Calu3 (cell line): ENCODE measurements at regions of chr11 and their contacts with region 1.

Region 1: DNA sequence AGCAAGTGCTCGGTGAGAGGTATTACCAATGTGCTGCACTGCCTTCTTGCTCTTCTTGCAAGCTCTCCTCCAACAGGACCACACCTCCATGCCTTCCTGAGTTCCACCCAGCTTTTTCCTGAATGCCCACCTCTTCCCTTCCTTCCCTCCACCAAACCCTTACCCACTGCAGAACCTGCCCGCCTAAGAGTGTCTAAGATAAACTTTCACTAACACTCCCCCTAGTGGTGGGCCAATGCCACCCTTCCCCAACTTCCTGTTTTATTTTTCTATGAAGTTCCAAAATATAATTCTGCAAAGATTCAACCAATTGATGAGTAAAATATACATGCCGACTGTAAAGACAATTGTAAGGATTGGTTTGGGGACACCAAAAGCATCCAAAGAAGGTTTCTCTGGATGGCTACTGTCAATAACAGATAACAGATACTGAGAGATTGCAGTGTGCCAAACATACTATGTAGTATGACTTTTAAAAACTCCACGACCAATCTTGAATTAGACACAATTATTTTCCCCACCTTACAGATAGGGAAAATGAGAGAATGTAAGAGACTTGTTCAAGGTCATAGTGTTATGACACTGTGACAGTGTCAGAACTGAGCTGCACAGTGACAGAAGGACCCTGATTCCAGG is 38.6 kb upstream of the BMAL1 start:
- DNase-seq: peak; percentile 68
- H3K4me3 Mint-ChIP-seq: no peak overlapping the region
- H3K27ac Mint-ChIP-seq: no peak overlapping the region
- H3K4me1 Mint-ChIP-seq: peaks cover 10% of the 10 kb centered on the region
- H3K27me3 Mint-ChIP-seq: peaks cover 14% of the 10 kb centered on the region
- CTCF ChIP-seq: peak; percentile 82

Region 2: GRCh38 chr11:12914400-12914912 is 324.5 kb before region 1 on chr11:
- CTCF ChIA-PET with region 1: no interaction called
- intact Hi-C with region 1: no loop called
- DNase-seq: peak; percentile 36
- H3K4me3 Mint-ChIP-seq: no peak overlapping the region
- H3K27ac Mint-ChIP-seq: no peak overlapping the region
- H3K4me1 Mint-ChIP-seq: no peaks in the 10 kb centered on the region
- H3K27me3 Mint-ChIP-seq: no peaks in the 10 kb centered on the region
- CTCF ChIP-seq: peak; percentile 34

Region 3: GRCh38 chr11:13000721-13001120 is 238.3 kb before region 1 on chr11:
- CTCF ChIA-PET with region 1: no interaction called
- intact Hi-C with region 1: no loop called
- DNase-seq: no peak
- H3K4me3 Mint-ChIP-seq: no peak overlapping the region
- H3K27ac Mint-ChIP-seq: no peak overlapping the region
- H3K4me1 Mint-ChIP-seq: no peaks in the 10 kb centered on the region
- H3K27me3 Mint-ChIP-seq: no peaks in the 10 kb centered on the region
- CTCF ChIP-seq: no peak

Region 4: GRCh38 chr11:13061284-13061990 is 177.6 kb before region 1 on chr11:
- CTCF ChIA-PET with region 1: no interaction called
- intact Hi-C with region 1: no loop called
- DNase-seq: no peak
- H3K4me3 Mint-ChIP-seq: no peak overlapping the region
- H3K27ac Mint-ChIP-seq: no peak overlapping the region
- H3K4me1 Mint-ChIP-seq: peaks cover 23% of the 10 kb centered on the region
- H3K27me3 Mint-ChIP-seq: no peaks in the 10 kb centered on the region
- CTCF ChIP-seq: no peak

Region 5: GRCh38 chr11:13343931-13344717 is 105.1 kb after region 1 on chr11:
- CTCF ChIA-PET with region 1: no interaction called
- intact Hi-C with region 1: loop called (anchors 2 kb)
- DNase-seq: peak; percentile 75
- H3K4me3 Mint-ChIP-seq: no peak overlapping the region
- H3K27ac Mint-ChIP-seq: no peak overlapping the region
- H3K4me1 Mint-ChIP-seq: peaks cover 26% of the 10 kb centered on the region
- H3K27me3 Mint-ChIP-seq: no peaks in the 10 kb centered on the region
- CTCF ChIP-seq: peak; percentile 80